Ovary (tissue), 10 donors: ENCODE measurements at regions of chr6 and their contacts with region 1.

Region 1: DNA sequence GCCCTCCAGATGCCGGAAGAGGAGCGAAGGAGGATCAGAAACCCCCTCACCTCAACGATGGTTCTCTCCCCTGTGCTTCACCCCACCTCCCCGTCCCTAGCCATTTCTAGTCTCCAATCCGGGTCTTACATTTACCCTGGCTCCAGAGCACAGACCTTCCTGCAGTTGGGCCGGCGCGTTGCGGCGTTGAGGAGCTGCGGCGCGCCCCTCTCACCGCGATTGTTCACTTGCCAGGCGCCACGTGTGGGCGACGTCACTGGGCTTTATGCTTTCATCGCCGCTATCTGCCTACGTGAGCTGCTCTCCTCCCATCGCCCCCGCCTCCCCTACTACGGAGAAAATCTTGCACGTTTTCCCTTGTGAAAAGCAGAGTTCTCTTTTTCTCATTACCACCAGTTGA is at the start of gene CRISP2:
- DNase-seq: peak in 1 of 5 donors; percentile 21
- H3K4me3 ChIP-seq: no peak within 1 kb of the TSS
- H3K27ac ChIP-seq: no peak within 1 kb of the TSS
- H3K4me1 ChIP-seq: no peaks in the 10 kb centered on the region
- H3K27me3 ChIP-seq: no peaks in the 10 kb centered on the region
- CTCF ChIP-seq: no peak
- EP300 ChIP-seq: no peak
- POLR2A ChIP-seq: no peak
- total RNA-seq, gene CRISP2: 0.64 to 24.1 (median 0.72) TPM in 3 of 7 donors, not detected in the others

Region 2: GRCh38 chr6:49653438-49653837 is 59.9 kb before region 1 on chr6:
- intact Hi-C with region 1: no loop called
- DNase-seq: no peak
- H3K4me3 ChIP-seq: no peak overlapping the region
- H3K27ac ChIP-seq: no peak overlapping the region
- H3K4me1 ChIP-seq: no peaks in the 10 kb centered on the region
- H3K27me3 ChIP-seq: no peaks in the 10 kb centered on the region
- CTCF ChIP-seq: no peak
- EP300 ChIP-seq: no peak
- POLR2A ChIP-seq: no peak

Region 3: DNA sequence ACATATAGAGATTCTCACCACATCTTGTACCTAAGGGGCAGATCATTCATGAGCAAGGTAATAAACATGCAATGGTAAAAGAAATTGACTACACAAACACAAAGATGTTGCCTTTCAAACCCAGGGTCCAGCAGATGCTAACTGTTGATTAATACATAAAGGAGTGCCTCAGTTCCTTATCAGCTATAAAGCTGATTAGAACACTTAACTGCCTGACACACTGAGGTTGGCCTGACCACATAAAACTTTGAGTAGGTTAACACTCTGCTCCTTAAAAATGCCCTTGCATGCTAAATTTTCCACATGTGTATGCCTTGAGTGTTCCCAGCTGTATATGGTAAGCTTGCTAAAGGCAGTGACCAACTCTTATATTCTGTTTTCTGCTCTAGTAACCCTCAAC is 14.9 kb before region 1 on chr6:
- intact Hi-C with region 1: loop called in 1 of 4 experiments (anchors 1 kb)
- DNase-seq: no peak
- H3K4me3 ChIP-seq: no peak overlapping the region
- H3K27ac ChIP-seq: no peak overlapping the region
- H3K4me1 ChIP-seq: no peaks in the 10 kb centered on the region
- H3K27me3 ChIP-seq: no peaks in the 10 kb centered on the region
- CTCF ChIP-seq: no peak
- EP300 ChIP-seq: no peak
- POLR2A ChIP-seq: no peak